ENCODE measurements at regions of chr1 and their contacts with region 1.

Region 1: GRCh38 chr1:8727809-8728213 is 89.6 kb downstream of the RERE start:
- DNase-seq: no peak
- ATAC-seq: no peak
- H3K4me3 Mint-ChIP-seq: no peak overlapping the region
- H3K27ac Mint-ChIP-seq: no peak overlapping the region
- H3K4me1 Mint-ChIP-seq: peaks cover 12% of the 10 kb centered on the region
- H3K27me3 Mint-ChIP-seq: no peaks in the 10 kb centered on the region

Region 2: DNA sequence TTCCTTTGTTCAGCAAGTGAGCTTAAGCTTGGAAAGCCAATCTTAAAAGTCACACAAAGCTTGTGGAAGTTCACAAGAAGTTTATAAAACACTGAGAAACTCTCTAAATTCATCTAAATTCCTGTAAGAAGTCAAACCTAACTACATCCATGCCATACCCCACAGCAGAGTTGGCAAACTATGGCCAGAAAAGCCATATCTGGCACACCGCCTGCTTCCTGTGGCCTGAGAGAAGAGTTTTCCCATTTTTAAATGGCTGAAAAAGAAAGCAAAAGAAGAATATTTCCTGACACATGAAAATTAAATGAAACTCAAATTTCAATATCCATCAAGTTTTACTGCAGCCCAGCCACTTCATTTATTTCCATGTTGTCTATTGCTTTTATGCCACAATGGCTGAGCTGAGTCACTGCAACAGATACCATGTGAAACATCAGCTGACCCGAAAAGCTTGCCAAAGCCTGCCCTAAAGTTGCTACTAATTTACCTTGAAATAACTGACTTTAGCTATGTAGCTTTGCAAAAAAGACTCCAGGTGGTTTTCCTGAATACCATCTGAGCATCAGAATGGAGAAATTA is 172.8 kb before region 1 on chr1:
- CTCF ChIA-PET with region 1: interaction called, 145 read pairs
- POLR2A ChIA-PET with region 1: no interaction called
- DNase-seq: no peak
- ATAC-seq: peak; percentile 38
- H3K4me3 Mint-ChIP-seq: no peak overlapping the region
- H3K27ac Mint-ChIP-seq: no peak overlapping the region
- H3K4me1 Mint-ChIP-seq: peaks cover 37% of the 10 kb centered on the region
- H3K27me3 Mint-ChIP-seq: no peaks in the 10 kb centered on the region

Region 3: GRCh38 chr1:8571200-8571984 is 156.4 kb before region 1 on chr1:
- CTCF ChIA-PET with region 1: interaction called, 24 read pairs
- POLR2A ChIA-PET with region 1: no interaction called
- DNase-seq: no peak
- ATAC-seq: no peak
- H3K4me3 Mint-ChIP-seq: no peak overlapping the region
- H3K27ac Mint-ChIP-seq: no peak overlapping the region
- H3K4me1 Mint-ChIP-seq: no peaks in the 10 kb centered on the region
- H3K27me3 Mint-ChIP-seq: no peaks in the 10 kb centered on the region

Region 4: DNA sequence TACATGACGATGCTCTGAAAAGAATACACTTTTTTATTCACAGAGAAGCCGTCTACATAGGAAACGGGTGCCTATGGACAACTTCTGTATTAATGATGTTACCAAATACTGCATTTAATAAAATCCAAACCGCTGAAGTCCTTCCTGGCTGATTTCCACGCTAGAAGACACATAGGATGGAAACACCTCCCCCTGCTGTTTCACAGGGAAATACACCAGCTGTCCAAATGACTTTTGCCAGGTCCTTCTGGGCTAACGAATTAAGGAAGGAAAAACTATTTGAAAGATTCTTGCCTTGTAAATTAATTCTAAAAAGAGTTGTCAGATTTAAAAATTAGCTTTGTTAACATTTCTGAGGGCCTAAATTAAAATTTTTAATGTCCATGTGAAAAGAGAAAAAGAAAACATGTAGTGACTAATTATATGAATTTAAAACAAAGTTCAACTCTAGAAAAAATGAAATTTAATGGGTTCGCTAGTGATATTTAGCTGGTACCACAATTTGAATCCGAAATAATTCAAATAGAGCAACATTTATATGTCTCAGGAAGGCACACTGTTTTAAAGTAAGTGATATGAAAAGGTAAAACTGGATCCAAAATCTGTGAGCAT is 56.4 kb before region 1 on chr1:
- CTCF ChIA-PET with region 1: interaction called, 56 read pairs
- POLR2A ChIA-PET with region 1: no interaction called
- DNase-seq: peak; percentile 41
- ATAC-seq: no peak
- H3K4me3 Mint-ChIP-seq: no peak overlapping the region
- H3K27ac Mint-ChIP-seq: no peak overlapping the region
- H3K4me1 Mint-ChIP-seq: peaks cover 26% of the 10 kb centered on the region
- H3K27me3 Mint-ChIP-seq: no peaks in the 10 kb centered on the region

Region 5: GRCh38 chr1:8702850-8703810 is 24.7 kb before region 1 on chr1:
- CTCF ChIA-PET with region 1: interaction called, 35 read pairs
- POLR2A ChIA-PET with region 1: interaction called, 7 read pairs
- DNase-seq: peak; percentile 72
- ATAC-seq: peak; percentile 67
- H3K4me3 Mint-ChIP-seq: peak overlapping the region; percentile 85
- H3K27ac Mint-ChIP-seq: peak overlapping the region; percentile 84
- H3K4me1 Mint-ChIP-seq: peaks cover 44% of the 10 kb centered on the region
- H3K27me3 Mint-ChIP-seq: peaks cover 26% of the 10 kb centered on the region

Region 6: GRCh38 chr1:8848663-8849386 is 121.0 kb after region 1 on chr1:
- CTCF ChIA-PET with region 1: interaction called, 22 read pairs
- POLR2A ChIA-PET with region 1: no interaction called
- DNase-seq: peak; percentile 80
- ATAC-seq: peak; percentile 96
- H3K4me3 Mint-ChIP-seq: no peak overlapping the region
- H3K27ac Mint-ChIP-seq: no peak overlapping the region
- H3K4me1 Mint-ChIP-seq: peaks cover 12% of the 10 kb centered on the region
- H3K27me3 Mint-ChIP-seq: peaks cover 2% of the 10 kb centered on the region